T-cell (primary cell): ENCODE measurements at regions of chr5 and their contacts with region 1.

Region 1: DNA sequence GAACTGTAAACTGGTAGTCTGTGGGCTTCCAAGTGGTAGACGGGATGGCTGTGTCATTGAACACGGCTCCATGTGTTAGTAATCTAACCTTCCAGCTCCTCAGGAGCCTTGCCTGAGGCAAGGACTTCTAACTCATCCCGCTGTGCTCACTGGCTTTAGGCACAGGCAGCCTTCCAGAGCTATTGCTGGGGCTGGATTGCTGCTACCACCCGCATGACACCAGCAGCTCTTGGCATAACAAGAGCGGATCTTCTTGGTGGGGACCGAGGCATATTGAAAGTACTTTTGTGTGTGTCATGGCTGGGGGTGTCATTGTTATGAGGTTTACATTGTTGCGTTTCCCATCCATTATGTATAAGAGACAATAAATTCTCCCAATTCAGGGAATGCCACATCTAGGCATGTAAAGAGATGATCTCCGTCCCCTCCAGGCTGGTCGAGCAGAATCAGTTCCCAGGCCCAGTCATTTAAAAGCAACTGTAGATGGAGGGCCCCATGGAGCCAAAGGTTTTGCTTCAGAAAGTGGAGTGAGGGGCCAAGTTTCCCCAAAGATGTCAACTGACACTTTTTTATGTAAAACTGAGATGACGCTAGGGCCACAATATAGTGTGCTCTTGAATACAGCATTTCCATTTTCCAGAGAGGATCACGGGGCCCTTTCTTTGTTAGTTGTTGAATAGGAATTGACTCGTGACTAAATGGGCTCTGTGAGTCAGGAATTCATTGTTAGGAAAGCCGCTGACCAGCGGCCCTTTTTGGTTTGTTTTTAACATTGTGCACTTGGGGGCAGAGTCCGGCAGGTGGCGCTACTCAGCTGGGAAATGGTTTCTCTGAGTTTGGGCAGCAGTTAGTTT is 759.6 kb downstream of the TAF11L14 start:
- DNase-seq: peak in 12 of 35 experiments; percentile 1 to 25 (median 8)
- ATAC-seq: no peak
- H3K4me3 ChIP-seq: no peak overlapping the region
- H3K4me3 Mint-ChIP-seq: no peak overlapping the region
- H3K27ac ChIP-seq: no peak overlapping the region
- H3K27ac Mint-ChIP-seq: no peak overlapping the region
- H3K4me1 ChIP-seq: no peaks in the 10 kb centered on the region
- H3K4me1 Mint-ChIP-seq: no peaks in the 10 kb centered on the region
- H3K27me3 ChIP-seq: no peaks in the 10 kb centered on the region
- H3K27me3 Mint-ChIP-seq: no peaks in the 10 kb centered on the region

Region 2: DNA sequence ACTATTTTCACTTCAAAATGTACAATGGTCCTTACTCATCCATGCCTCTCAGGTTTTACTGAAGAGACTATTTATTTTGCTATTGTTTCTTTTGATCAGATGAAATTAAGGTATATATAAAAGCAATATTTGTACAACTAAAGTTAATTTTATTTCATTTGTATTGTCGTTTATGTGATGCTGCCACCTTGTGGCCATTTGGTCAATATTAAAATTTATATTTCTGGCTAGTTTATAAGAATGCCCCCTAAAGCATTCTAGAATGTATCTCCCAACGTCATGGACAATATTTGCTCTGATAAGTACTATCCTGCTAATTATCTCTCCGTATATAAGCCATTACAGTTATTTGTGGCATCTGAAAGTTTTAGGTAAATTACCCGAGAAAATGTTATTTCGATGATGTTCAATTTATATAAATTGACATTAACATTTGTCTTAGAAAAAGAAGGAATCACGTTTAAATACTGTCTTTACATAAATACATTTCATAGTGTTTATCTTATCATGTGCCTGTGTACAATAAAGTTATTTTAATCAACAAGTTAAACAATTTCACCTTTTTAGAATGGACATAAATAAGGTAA is 79.5 kb before region 1 on chr5:
- CTCF ChIA-PET with region 1: no interaction called
- POLR2A ChIA-PET with region 1: no interaction called
- DNase-seq: peak in 1 of 35 experiments; percentile 6
- ATAC-seq: no peak
- H3K4me3 ChIP-seq: no peak overlapping the region
- H3K4me3 Mint-ChIP-seq: no peak overlapping the region
- H3K27ac ChIP-seq: no peak overlapping the region
- H3K27ac Mint-ChIP-seq: no peak overlapping the region
- H3K4me1 ChIP-seq: no peaks in the 10 kb centered on the region
- H3K4me1 Mint-ChIP-seq: no peaks in the 10 kb centered on the region
- H3K27me3 ChIP-seq: no peaks in the 10 kb centered on the region
- H3K27me3 Mint-ChIP-seq: no peaks in the 10 kb centered on the region

Region 3: DNA sequence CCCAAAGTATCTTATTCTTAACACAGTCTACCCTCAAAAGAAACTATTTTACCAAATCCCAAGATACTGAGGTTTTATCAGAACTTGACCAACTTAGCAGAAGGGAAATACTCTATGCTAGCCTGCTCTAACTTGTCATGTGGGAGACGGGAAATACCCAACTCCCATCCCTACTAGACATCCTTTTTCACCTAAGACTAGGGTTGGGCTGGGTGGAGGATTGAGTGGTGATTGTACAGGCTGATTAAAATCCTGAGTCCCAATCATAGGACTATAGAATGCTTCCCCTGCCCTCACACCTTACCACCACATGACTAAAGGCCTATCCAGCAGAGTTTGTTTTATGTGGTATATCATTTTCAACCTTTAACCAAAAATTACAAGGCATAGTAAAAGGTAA is 26.9 kb after region 1 on chr5:
- CTCF ChIA-PET with region 1: no interaction called
- POLR2A ChIA-PET with region 1: no interaction called
- DNase-seq: no peak
- ATAC-seq: no peak
- H3K4me3 ChIP-seq: no peak overlapping the region
- H3K4me3 Mint-ChIP-seq: no peak overlapping the region
- H3K27ac ChIP-seq: no peak overlapping the region
- H3K27ac Mint-ChIP-seq: no peak overlapping the region
- H3K4me1 ChIP-seq: no peaks in the 10 kb centered on the region
- H3K4me1 Mint-ChIP-seq: no peaks in the 10 kb centered on the region
- H3K27me3 ChIP-seq: no peaks in the 10 kb centered on the region
- H3K27me3 Mint-ChIP-seq: no peaks in the 10 kb centered on the region

Region 4: GRCh38 chr5:18699681-18700080 is 305.9 kb after region 1 on chr5:
- CTCF ChIA-PET with region 1: no interaction called
- POLR2A ChIA-PET with region 1: interaction called in 1 of 2 experiments, 17 read pairs
- DNase-seq: no peak
- ATAC-seq: no peak
- H3K4me3 ChIP-seq: no peak overlapping the region
- H3K4me3 Mint-ChIP-seq: no peak overlapping the region
- H3K27ac ChIP-seq: no peak overlapping the region
- H3K27ac Mint-ChIP-seq: no peak overlapping the region
- H3K4me1 ChIP-seq: peaks cover 0 to 4% of the 10 kb centered on the region in 2 experiments
- H3K4me1 Mint-ChIP-seq: peaks cover 14 to 15% (median 15%) of the 10 kb centered on the region in 3 donors
- H3K27me3 ChIP-seq: no peaks in the 10 kb centered on the region
- H3K27me3 Mint-ChIP-seq: no peaks in the 10 kb centered on the region